WTC11 (cell line): ENCODE measurements at regions of chr16 and their contacts with region 1.

Region 1: DNA sequence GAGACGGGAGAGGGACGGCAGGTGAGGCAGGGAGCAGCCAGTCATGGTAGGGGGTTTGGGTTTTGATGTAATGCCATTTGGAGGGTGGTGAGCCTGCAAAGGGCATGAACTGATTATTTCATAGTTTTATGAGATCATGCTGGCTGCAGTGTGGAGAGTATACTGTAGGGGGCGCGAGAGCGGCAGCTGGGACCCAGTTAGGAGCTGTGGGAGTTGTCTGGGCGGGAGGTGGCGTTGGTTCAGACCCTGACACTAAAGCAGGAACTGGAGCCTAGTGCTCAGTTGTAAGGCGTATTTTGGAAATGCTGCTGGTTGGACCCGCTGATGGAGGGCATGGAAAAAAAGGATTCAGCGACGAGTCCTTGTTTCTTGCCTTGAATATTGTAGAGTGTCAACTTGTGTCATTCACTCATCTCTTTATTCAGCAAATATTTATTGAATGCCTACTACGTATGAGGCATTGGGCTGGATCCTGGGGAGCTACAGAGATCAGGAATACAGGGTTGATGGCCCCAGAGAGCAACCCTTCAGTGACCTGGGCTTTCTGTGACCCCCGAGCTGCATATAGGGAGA is 23.7 kb upstream of the KDM8 start:
- DNase-seq: peak; percentile 92
- ATAC-seq: peak; percentile 96
- H3K4me3 Mint-ChIP-seq: no peak overlapping the region
- H3K27ac Mint-ChIP-seq: no peak overlapping the region
- H3K4me1 Mint-ChIP-seq: no peaks in the 10 kb centered on the region
- H3K27me3 Mint-ChIP-seq: peaks cover 3% of the 10 kb centered on the region
- CTCF ChIP-seq: peak; percentile 75

Region 2: DNA sequence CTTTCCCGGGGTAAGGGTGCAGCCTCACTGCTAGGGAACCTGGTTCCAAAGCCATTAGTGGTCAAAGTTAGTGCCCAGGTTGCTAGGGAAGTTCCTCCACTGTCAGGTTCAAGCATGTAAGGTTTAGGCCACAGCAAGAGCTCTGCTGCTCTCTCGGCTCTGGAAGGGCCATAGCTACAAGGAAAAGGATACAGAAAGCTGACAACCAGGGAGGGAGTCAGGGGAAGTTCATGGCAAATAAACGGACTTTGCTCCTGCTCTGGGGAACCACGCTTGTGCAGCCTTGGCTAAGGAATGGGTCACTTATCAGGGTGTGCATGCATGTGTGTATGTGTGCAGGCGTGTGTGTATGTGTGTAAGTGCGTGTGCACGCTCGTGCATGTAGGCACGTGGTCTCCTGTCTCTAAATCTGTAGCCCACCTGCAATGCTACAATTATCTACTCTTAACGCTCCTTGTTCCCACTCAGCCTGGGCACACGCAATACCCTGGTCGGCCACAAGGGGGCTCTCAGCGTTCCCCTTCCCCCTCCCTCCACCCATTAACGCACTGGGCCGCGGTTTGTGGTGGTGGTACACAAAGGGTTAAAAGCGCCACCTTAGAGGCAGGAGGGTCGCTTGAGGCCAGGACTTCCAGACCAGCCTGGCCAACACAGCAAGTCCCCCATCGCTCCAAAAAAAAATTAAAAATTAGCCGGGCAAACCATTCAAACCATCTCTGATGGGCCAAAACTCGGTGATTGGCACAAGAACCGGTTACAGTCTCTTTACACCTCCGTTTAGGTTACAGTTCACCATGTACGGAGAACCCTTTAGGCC is 24.7 kb before region 1 on chr16:
- CTCF ChIA-PET with region 1: interaction called, 14 read pairs
- POLR2A ChIA-PET with region 1: no interaction called
- DNase-seq: peak; percentile 86
- ATAC-seq: peak; percentile 89
- H3K4me3 Mint-ChIP-seq: peak overlapping the region; percentile 54
- H3K27ac Mint-ChIP-seq: no peak overlapping the region
- H3K4me1 Mint-ChIP-seq: peaks cover 7% of the 10 kb centered on the region
- H3K27me3 Mint-ChIP-seq: no peaks in the 10 kb centered on the region; the same call in 1 of the 2 replicates
- CTCF ChIP-seq: peak; percentile 99

Region 3: GRCh38 chr16:27203429-27204231 is 24.0 kb after region 1 on chr16 and contains the start of gene KDM8:
- CTCF ChIA-PET with region 1: interaction called, 31 read pairs
- POLR2A ChIA-PET with region 1: interaction called, 3 read pairs
- DNase-seq: peak; percentile 97
- ATAC-seq: peak; percentile 90
- H3K4me3 Mint-ChIP-seq: peak within 1 kb of the TSS; percentile 96
- H3K27ac Mint-ChIP-seq: peak within 1 kb of the TSS; percentile 100
- H3K4me1 Mint-ChIP-seq: peaks cover 18% of the 10 kb centered on the region
- H3K27me3 Mint-ChIP-seq: no peaks in the 10 kb centered on the region; the same call in none of the 2 replicates
- CTCF ChIP-seq: no peak
- total RNA-seq, gene KDM8: 10.9 to 16.5 TPM (median 11.7 TPM) in 3 replicates

Region 4: DNA sequence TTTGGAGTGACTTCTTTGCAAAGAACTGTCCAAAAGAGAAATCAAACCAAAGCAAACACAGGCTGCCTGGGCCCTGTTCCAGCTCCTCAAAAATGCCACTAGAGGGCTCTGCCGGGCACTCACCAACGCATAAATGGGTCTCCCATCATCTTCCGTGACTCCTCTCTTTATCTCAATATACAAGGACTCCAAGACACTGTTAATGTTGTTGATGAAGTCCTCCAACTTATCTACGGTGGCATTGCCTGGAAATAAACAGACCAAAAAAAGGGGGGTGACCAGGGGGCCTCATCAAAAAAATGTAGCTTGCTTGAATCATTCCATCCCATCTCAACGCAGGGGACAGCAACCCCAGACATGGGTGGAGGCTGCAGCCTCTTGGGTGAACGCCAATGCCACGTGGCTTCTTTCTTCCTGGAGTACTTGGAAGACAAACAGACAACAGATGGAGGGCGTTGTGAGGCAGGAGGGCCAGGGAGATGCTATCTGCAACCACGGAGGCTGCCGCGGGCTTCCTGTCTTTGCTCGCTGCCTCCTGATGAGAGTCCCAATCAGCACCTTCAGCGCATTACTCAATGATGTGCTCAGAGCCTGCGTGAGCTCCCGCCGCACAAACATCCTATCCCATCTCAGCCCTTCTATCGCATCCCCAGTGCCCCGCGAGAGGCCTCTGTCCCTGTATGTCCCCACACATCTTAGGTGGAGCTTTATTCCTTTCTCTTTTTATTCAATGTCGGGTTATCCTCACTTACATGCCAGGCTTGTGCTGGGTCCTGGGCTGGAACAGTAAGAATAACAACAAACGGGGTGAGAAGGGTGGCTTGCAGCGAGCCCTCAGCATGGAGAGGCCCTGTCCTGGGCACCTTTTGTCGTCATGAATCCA is 55.7 kb after region 1 on chr16:
- CTCF ChIA-PET with region 1: interaction called, 16 read pairs
- POLR2A ChIA-PET with region 1: no interaction called
- DNase-seq: peak; percentile 46
- ATAC-seq: peak; percentile 69
- H3K4me3 Mint-ChIP-seq: no peak overlapping the region
- H3K27ac Mint-ChIP-seq: no peak overlapping the region
- H3K4me1 Mint-ChIP-seq: peaks cover 26% of the 10 kb centered on the region
- H3K27me3 Mint-ChIP-seq: no peaks in the 10 kb centered on the region
- CTCF ChIP-seq: peak; percentile 43; the same call in 1 of the 2 replicates

Region 5: DNA sequence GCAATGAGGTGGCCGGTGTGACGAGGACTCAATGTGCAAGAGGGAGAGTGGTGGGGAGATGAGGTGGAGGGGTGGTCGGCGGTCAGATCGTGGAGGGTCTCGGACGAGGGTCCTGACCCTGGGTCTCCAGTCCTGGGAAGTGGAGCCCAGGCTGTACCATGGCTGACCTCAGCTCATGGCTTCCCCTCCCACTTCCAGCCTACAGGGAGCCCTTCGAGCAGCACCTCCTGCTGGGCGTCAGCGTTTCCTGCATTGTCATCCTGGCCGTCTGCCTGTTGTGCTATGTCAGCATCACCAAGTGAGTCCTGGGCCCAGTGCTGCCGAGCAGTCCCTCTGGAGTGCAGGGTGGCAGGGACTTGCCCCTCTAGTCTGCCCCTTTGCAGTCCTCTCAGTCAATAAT is 176.0 kb after region 1 on chr16:
- CTCF ChIA-PET with region 1: interaction called, 11 read pairs
- POLR2A ChIA-PET with region 1: no interaction called
- DNase-seq: peak; percentile 80
- ATAC-seq: peak; percentile 96
- H3K4me3 Mint-ChIP-seq: no peak overlapping the region
- H3K27ac Mint-ChIP-seq: no peak overlapping the region; the same call in 1 of the 2 replicates
- H3K4me1 Mint-ChIP-seq: peaks cover 3% of the 10 kb centered on the region; the same call in 1 of the 2 replicates
- H3K27me3 Mint-ChIP-seq: no peaks in the 10 kb centered on the region
- CTCF ChIP-seq: no peak

Region 6: DNA sequence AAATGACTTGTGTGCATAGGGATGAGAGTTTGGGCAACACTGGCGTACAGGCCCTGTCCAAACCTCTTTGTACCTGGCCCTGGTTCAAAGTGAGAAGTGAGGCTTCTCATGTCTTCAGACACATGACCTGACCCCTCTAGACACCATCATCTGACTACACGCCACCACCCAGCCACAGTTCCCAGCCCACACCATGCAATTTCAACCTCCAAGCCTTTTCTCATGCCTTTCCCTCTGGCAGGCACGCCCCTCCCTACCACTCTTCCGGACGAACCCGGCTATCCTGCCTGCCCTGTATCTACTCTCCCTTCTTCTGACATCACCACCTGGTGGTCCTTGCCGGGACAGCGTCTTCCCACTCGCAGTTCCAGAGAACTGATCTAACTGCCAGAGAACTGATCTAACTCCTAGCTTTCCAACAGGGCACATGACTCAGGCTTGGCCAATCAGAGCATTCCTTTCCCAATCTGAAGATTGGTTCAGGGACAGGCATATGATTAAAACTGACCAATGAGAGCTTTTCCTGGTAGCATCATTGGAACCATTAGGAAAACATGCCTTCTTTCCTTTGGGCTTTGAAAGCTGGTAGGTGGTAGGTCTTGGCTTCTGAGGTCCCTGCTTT is 195.3 kb after region 1 on chr16:
- CTCF ChIA-PET with region 1: interaction called, 125 read pairs
- POLR2A ChIA-PET with region 1: interaction called, 4 read pairs
- DNase-seq: peak; percentile 93
- ATAC-seq: peak; percentile 100
- H3K4me3 Mint-ChIP-seq: no peak overlapping the region
- H3K27ac Mint-ChIP-seq: no peak overlapping the region
- H3K4me1 Mint-ChIP-seq: no peaks in the 10 kb centered on the region
- H3K27me3 Mint-ChIP-seq: no peaks in the 10 kb centered on the region; the same call in 1 of the 2 replicates
- CTCF ChIP-seq: peak; percentile 32; the same call in 1 of the 2 replicates

Region 7: GRCh38 chr16:27426423-27427408 is 247.1 kb after region 1 on chr16:
- CTCF ChIA-PET with region 1: interaction called, 10 read pairs
- POLR2A ChIA-PET with region 1: no interaction called
- DNase-seq: no peak
- ATAC-seq: peak; percentile 85
- H3K4me3 Mint-ChIP-seq: no peak overlapping the region
- H3K27ac Mint-ChIP-seq: no peak overlapping the region
- H3K4me1 Mint-ChIP-seq: no peaks in the 10 kb centered on the region
- H3K27me3 Mint-ChIP-seq: peaks cover 3% of the 10 kb centered on the region; the same call in 1 of the 2 replicates
- CTCF ChIP-seq: no peak